Mammary epithelial cell (primary cell): ENCODE measurements at regions of chr18 and their contacts with region 1.

Region 1: DNA sequence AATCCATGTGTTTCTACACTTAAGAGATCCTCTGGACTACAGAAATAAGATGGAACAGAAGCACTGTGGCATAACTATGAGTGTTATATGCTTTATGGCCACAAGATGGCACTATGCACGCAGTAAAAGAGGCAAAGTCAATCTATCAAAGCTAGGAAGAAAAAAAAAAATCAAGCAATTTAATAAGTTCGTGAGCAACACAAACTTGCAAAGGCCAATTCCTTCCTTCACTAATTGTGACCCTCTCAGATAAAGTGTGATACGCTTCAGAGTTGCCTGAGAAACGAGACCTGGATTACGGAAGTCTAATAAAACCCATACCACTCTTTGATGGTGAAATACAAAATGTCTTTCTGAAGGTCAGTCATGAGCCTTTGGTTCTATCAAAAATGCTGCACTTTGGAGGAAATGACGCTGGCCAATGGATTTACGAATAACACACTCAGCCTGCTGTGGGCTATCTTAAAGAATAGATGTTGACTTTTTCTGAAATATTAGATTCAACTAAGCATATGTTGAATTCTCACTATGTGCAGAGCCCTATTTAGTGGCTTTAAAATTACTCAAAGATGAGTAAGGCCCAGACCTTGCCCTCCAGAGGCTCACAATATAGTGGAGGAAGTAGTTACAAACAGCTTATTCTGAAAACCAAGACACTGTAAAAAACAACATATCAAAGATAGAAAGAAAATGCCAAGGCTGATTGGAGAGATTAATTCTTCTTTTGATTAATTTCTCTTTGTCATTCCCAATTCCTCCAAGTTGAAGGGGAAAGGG is 35.5 kb upstream of the TTR start:
- DNase-seq: peak; percentile 51
- H3K4me3 ChIP-seq: no peak overlapping the region
- H3K27ac ChIP-seq: no peak overlapping the region
- H3K4me1 ChIP-seq: peaks cover 3% of the 10 kb centered on the region
- H3K27me3 ChIP-seq: no peaks in the 10 kb centered on the region
- CTCF ChIP-seq: peak; percentile 73 to 78

Region 2: DNA sequence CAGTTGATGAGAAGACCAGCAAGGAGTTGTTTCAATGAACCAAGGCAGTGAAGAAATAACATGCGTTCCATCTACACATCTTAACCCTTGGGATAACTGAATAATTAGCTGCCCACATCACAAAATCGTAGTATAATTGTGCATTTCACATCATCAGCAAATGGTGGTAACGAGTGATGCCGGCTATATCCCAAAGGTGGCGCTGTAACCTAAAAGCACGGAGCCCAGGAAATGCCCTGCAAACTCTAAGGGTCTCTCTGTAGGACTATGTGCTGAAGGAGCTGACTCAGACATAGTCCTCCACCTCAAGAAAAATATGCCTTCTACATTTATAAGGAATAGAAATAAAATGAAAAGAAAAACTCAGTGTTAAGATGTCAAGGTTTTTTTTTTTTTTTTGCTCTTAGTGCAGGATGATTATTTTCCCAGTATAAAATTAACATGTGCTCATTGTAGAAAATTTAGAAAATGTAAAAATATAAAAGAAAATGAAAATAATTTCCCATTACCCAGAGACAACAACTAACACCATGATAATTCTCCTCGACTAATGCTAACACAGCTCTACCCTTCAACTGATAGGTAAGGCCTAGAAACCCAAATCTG is 131.7 kb before region 1 on chr18:
- CTCF ChIA-PET with region 1: no interaction called
- dilution Hi-C with region 1: no loop called
- in situ Hi-C with region 1: no loop called
- intact Hi-C with region 1: loop called (anchors 5 kb)
- DNase-seq: peak; percentile 31
- H3K4me3 ChIP-seq: no peak overlapping the region
- H3K27ac ChIP-seq: no peak overlapping the region
- H3K4me1 ChIP-seq: peaks cover 25% of the 10 kb centered on the region
- H3K27me3 ChIP-seq: no peaks in the 10 kb centered on the region
- CTCF ChIP-seq: peak; percentile 96 to 99

Region 3: DNA sequence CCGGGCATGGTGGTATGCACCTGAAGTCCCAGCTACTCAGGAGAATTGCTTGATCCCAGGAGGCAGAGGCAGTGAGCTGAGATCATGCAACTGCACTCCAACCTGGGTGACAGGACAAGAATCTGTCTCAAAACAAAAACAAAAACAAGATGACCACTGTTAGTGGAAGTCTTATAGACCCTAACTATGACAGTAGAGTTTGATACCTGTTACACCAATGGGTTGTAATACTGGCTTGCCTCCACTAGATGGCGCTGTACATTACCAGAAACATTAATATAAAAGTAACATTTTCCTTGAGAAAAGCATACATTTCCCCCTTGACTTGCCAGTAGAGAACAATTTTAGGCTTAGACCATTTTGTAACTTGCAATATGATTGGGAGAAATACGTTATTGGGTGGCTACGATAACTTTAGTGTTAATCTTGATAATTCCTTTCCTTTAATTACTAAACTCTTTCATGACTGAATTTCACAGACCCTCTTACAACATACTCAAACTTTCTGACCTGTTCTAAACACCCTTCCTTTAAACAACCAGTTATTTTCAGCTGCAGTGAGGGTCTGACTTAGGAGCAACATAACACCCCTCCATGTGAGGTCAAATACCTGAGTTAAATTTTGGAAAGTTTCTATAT is 185.1 kb after region 1 on chr18:
- CTCF ChIA-PET with region 1: no interaction called
- dilution Hi-C with region 1: no loop called
- in situ Hi-C with region 1: no loop called
- intact Hi-C with region 1: loop called (anchors 1 kb)
- DNase-seq: peak; percentile 12
- H3K4me3 ChIP-seq: no peak overlapping the region
- H3K27ac ChIP-seq: no peak overlapping the region
- H3K4me1 ChIP-seq: no peaks in the 10 kb centered on the region
- H3K27me3 ChIP-seq: no peaks in the 10 kb centered on the region
- CTCF ChIP-seq: peak; percentile 75 to 82

Region 4: DNA sequence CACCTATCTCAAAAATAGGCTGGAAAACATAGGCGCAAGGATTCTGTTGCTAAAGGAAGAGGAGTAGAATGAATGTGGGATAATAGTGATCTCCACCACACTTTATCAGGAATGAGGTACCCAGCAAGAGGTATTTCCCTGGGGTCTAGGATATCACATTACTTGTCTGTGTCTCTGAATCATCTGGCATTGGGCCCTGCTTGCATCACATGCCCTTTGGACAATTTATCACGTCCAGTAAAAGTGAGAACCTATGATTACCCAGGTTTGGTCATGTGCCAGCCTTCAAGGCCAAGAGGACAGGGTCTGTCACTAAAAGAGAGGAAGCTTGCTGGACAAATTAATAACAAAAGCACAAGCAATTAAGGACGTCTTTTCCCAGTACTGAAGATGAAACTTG is 398.2 kb after region 1 on chr18:
- CTCF ChIA-PET with region 1: no interaction called
- dilution Hi-C with region 1: no loop called
- in situ Hi-C with region 1: loop called in 1 of 2 experiments (anchors 25 kb)
- intact Hi-C with region 1: loop called (anchors 5 kb)
- DNase-seq: no peak
- H3K4me3 ChIP-seq: no peak overlapping the region
- H3K27ac ChIP-seq: no peak overlapping the region
- H3K4me1 ChIP-seq: no peaks in the 10 kb centered on the region
- H3K27me3 ChIP-seq: no peaks in the 10 kb centered on the region
- CTCF ChIP-seq: no peak

Region 5: GRCh38 chr18:32010124-32010738 is 454.1 kb after region 1 on chr18:
- CTCF ChIA-PET with region 1: no interaction called
- dilution Hi-C with region 1: no loop called
- in situ Hi-C with region 1: no loop called
- intact Hi-C with region 1: no loop called
- DNase-seq: peak; percentile 10
- H3K4me3 ChIP-seq: no peak overlapping the region
- H3K27ac ChIP-seq: no peak overlapping the region
- H3K4me1 ChIP-seq: no peaks in the 10 kb centered on the region
- H3K27me3 ChIP-seq: no peaks in the 10 kb centered on the region
- CTCF ChIP-seq: no peak

Region 6: GRCh38 chr18:32072321-32072720 is 516.2 kb after region 1 on chr18:
- CTCF ChIA-PET with region 1: no interaction called
- dilution Hi-C with region 1: no loop called
- in situ Hi-C with region 1: no loop called
- intact Hi-C with region 1: loop called (anchors 5 kb)
- DNase-seq: no peak
- H3K4me3 ChIP-seq: no peak overlapping the region
- H3K27ac ChIP-seq: no peak overlapping the region
- H3K4me1 ChIP-seq: no peaks in the 10 kb centered on the region
- H3K27me3 ChIP-seq: no peaks in the 10 kb centered on the region
- CTCF ChIP-seq: peak; percentile 24 to 54